Activated CD4-positive, alpha-beta memory T cell treated with anti-CD3 and anti-CD28 coated beads for 36 hours (primary cell): ENCODE measurements at regions of chr6 and their contacts with region 1.

Region 1: GRCh38 chr6:14734416-14735340 is 511.2 kb upstream of the JARID2 start:
- DNase-seq: peak; percentile 67
- H3K4me3 Mint-ChIP-seq: peak overlapping the region; percentile 73
- H3K27ac Mint-ChIP-seq: peak overlapping the region; percentile 100
- H3K4me1 Mint-ChIP-seq: peaks cover 98% of the 10 kb centered on the region
- H3K27me3 Mint-ChIP-seq: no peaks in the 10 kb centered on the region

Region 2: GRCh38 chr6:13641315-13641714 is 1093.4 kb before region 1 on chr6:
- CTCF ChIA-PET with region 1: no interaction called
- POLR2A ChIA-PET with region 1: no interaction called
- intact Hi-C with region 1: no loop called
- DNase-seq: no peak
- H3K4me3 Mint-ChIP-seq: no peak overlapping the region
- H3K27ac Mint-ChIP-seq: peak overlapping the region; percentile 76
- H3K4me1 Mint-ChIP-seq: peaks cover 36% of the 10 kb centered on the region
- H3K27me3 Mint-ChIP-seq: no peaks in the 10 kb centered on the region

Region 3: GRCh38 chr6:14452567-14453527 is 281.8 kb before region 1 on chr6:
- CTCF ChIA-PET with region 1: no interaction called
- POLR2A ChIA-PET with region 1: interaction called, 3 read pairs
- intact Hi-C with region 1: loop called (anchors 1 kb)
- DNase-seq: peak; percentile 88
- H3K4me3 Mint-ChIP-seq: peak overlapping the region; percentile 34
- H3K27ac Mint-ChIP-seq: peak overlapping the region; percentile 88
- H3K4me1 Mint-ChIP-seq: peaks cover 76% of the 10 kb centered on the region
- H3K27me3 Mint-ChIP-seq: no peaks in the 10 kb centered on the region

Region 4: GRCh38 chr6:14711056-14711703 is 23.5 kb before region 1 on chr6:
- CTCF ChIA-PET with region 1: interaction called, 45 read pairs
- POLR2A ChIA-PET with region 1: interaction called, 125 read pairs
- intact Hi-C with region 1: loop called (anchors 1 kb)
- DNase-seq: peak; percentile 86
- H3K4me3 Mint-ChIP-seq: peak overlapping the region; percentile 80
- H3K27ac Mint-ChIP-seq: peak overlapping the region; percentile 96
- H3K4me1 Mint-ChIP-seq: peaks cover 70% of the 10 kb centered on the region
- H3K27me3 Mint-ChIP-seq: no peaks in the 10 kb centered on the region

Region 5: GRCh38 chr6:14876778-14877613 is 142.3 kb after region 1 on chr6:
- CTCF ChIA-PET with region 1: interaction called, 4 read pairs
- POLR2A ChIA-PET with region 1: interaction called, 90 read pairs
- intact Hi-C with region 1: loop called (anchors 1 kb)
- DNase-seq: peak; percentile 59
- H3K4me3 Mint-ChIP-seq: peak overlapping the region; percentile 40
- H3K27ac Mint-ChIP-seq: peak overlapping the region; percentile 97
- H3K4me1 Mint-ChIP-seq: peaks cover 74% of the 10 kb centered on the region
- H3K27me3 Mint-ChIP-seq: no peaks in the 10 kb centered on the region

Region 6: DNA sequence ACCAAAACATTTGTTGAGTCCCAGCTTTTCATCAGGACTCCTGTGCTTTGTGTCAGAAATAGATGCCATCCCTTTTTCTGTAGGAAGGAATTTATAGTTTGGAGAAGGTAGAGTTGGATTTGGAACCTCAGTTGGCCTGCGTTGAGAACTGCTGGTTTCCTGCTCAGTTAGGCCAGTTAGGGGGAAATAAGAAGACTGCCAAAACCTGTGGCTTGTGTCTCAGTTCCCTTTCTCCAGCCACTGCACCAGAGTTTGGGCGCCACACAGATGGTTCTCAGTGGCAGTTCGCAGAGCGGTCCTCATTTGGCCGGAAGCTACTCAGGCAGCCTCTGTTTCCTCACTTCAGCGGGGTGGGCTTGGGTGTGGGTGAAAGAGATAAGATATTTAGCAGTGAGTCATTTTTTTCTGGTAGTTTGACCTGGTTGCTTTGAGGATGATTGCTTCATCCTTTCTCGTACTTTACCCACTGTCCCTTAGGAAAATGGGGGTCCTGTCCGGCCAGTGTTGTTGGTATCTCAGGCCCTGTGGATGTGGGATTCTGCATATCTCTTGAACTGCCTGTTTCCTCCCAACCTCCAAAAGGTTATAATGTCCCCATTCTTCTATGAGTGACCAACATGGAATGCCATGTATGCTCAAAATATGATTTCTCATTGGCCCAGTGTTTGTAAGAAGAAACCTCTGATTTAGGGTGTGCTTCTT is 564.9 kb after region 1 on chr6:
- CTCF ChIA-PET with region 1: no interaction called
- POLR2A ChIA-PET with region 1: interaction called, 3 read pairs
- intact Hi-C with region 1: loop called (anchors 5 kb)
- DNase-seq: peak; percentile 46
- H3K4me3 Mint-ChIP-seq: no peak overlapping the region
- H3K27ac Mint-ChIP-seq: peak overlapping the region; percentile 50
- H3K4me1 Mint-ChIP-seq: peaks cover 79% of the 10 kb centered on the region
- H3K27me3 Mint-ChIP-seq: no peaks in the 10 kb centered on the region

Region 7: DNA sequence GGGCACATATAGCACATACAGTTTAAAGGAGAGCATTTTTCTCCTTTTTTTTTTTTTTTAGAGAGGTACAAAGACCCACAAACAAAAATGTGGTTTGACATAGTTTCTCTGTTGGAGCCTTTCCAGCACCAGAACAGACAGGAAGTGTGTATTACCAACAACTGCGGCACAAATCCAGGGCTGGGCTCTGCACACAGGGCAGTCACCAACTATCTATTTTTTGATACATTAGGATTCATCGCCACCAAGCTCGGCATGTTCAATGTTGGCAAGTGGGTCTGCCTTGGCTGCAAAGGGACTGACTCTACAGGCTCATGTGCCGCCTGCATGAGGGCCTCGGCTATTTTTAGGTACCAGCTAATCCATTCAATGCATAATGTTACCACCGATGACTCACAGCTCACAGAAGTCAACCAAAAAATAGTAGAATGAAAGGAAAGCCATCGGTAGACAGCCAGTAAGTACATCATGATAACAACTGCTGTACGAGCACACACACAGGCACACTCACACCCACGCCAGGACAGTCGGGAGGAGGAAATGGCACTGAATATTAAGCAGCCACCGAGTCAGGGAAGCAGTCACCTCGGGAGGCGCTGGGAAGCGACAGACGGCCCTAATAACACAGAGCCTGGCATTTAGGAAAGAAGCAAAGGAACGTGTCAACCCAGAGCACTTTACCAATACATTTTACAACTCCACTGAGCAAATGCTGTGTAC is 1585.3 kb after region 1 on chr6:
- CTCF ChIA-PET with region 1: no interaction called
- POLR2A ChIA-PET with region 1: no interaction called
- intact Hi-C with region 1: loop called (anchors 10 kb)
- DNase-seq: peak; percentile 81
- H3K4me3 Mint-ChIP-seq: peak overlapping the region; percentile 50
- H3K27ac Mint-ChIP-seq: peak overlapping the region; percentile 84
- H3K4me1 Mint-ChIP-seq: peaks cover 82% of the 10 kb centered on the region
- H3K27me3 Mint-ChIP-seq: no peaks in the 10 kb centered on the region